MCF 10A (cell line): ENCODE measurements at regions of chr2 and their contacts with region 1.

Region 1: GRCh38 chr2:9205963-9206948 is at the start of gene ASAP2:
- DNase-seq: peak; percentile 67
- H3K4me3 Mint-ChIP-seq: peak within 1 kb of the TSS; percentile 81
- H3K27ac Mint-ChIP-seq: peak within 1 kb of the TSS; percentile 69
- H3K4me1 Mint-ChIP-seq: peaks cover 10% of the 10 kb centered on the region
- H3K27me3 Mint-ChIP-seq: no peaks in the 10 kb centered on the region
- CTCF ChIP-seq: peak; percentile 88
- total RNA-seq, gene ASAP2: 80.8 and 89.5 TPM in 2 replicates

Region 2: DNA sequence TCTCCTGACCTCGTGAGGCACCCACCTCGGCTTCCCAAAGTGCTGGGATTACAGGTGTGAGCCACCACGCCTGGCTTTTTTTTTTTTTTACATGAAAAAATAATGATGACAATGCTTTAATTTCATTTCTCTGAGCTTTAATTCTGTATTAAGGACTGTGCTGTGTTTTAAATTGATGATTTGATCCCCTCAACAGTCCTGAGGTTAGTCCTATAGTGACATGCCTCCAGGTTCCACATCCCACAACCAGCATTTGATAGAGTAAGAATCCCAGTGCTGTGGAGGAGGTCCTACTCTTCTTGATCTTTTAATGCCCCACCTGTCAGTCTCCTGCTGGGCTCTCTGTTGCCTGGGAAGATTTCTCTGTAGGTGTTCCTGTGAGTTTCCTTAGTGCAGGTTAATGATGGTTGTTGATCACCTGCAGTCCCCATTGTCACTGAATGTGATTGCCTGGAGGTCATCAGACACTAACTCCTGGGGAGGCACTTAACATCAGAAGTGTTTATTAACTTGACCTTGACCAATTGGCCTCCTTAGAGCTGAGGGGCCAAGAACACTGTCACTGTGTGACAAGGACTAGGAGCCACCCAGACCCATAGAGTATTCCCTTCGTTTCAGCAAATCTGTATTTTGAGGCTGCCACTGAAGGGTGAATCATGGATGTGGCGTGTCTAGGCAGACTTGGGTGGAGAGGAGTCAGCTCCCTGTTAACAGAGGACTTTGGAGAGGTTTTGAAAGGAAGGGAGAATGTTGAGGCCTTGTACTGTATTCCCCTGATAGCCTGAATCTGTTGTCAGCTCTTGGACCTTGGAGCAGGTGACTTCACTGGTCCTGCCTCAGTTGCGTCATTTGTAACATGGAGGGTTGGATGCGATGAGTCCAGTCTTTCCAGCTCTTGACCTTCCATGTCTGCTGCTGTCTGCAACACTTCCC is 11.8 kb after region 1 on chr2:
- CTCF ChIA-PET with region 1: interaction called, 3 read pairs
- POLR2A ChIA-PET with region 1: interaction called, 18 read pairs
- intact Hi-C with region 1: no loop called
- DNase-seq: no peak
- H3K4me3 Mint-ChIP-seq: no peak overlapping the region
- H3K27ac Mint-ChIP-seq: peak overlapping the region; percentile 59
- H3K4me1 Mint-ChIP-seq: peaks cover 45% of the 10 kb centered on the region
- H3K27me3 Mint-ChIP-seq: no peaks in the 10 kb centered on the region
- CTCF ChIP-seq: no peak

Region 3: DNA sequence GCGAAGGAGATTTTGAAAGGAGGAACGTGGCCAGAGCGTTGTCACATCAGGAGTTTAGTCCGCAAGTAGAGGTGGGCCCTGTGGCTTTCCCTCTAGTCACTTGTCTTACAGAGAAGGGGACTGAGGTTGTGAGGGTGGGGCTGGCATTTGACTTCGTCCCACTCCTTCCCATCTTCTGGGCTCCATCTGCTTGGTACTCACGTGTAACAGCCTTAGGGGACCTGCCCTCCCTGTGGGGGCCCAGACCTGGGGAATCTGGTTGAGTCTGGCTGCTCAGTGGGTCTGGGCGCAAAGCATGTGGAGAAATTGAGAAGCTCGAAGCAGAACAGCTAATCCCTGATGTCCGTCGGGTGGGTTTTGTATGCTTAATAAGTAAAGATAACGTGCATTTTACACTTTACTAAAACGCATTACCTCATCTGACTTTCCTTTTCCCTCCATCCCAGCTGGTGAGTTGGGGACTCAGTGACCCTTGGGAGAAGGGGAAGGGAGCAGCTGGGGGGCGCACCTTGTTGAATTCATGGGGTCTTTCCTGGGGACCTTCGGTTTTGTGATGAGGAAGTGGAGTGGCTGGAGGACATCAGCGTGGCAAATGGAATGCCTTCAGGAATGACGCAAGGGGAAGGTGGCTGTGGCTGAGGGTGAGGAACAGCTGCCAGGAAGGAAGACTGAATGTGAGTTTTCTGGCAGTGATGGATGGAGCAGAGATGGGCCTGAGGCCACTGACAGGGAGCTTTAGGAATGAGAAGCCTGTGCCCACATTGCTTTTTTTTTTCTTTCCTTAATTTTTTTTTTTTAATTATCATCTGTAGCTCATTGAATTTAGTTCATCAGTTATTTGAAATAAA is 45.1 kb after region 1 on chr2:
- CTCF ChIA-PET with region 1: interaction called, 20 read pairs
- POLR2A ChIA-PET with region 1: interaction called, 64 read pairs
- intact Hi-C with region 1: loop called (anchors 5 kb)
- DNase-seq: peak; percentile 95
- H3K4me3 Mint-ChIP-seq: peak overlapping the region; percentile 65
- H3K27ac Mint-ChIP-seq: peak overlapping the region; percentile 90
- H3K4me1 Mint-ChIP-seq: peaks cover 70% of the 10 kb centered on the region
- H3K27me3 Mint-ChIP-seq: no peaks in the 10 kb centered on the region
- CTCF ChIP-seq: no peak

Region 4: GRCh38 chr2:9310377-9310776 is 104.1 kb after region 1 on chr2:
- CTCF ChIA-PET with region 1: interaction called, 7 read pairs
- POLR2A ChIA-PET with region 1: interaction called, 46 read pairs
- intact Hi-C with region 1: loop called (anchors 2 kb)
- DNase-seq: peak; percentile 88
- H3K4me3 Mint-ChIP-seq: peak overlapping the region; percentile 39
- H3K27ac Mint-ChIP-seq: peak overlapping the region; percentile 85
- H3K4me1 Mint-ChIP-seq: peaks cover 54% of the 10 kb centered on the region
- H3K27me3 Mint-ChIP-seq: no peaks in the 10 kb centered on the region
- CTCF ChIP-seq: no peak